HepG2 (cell line): ENCODE measurements at regions of chrX and their contacts with region 1.

Region 1: DNA sequence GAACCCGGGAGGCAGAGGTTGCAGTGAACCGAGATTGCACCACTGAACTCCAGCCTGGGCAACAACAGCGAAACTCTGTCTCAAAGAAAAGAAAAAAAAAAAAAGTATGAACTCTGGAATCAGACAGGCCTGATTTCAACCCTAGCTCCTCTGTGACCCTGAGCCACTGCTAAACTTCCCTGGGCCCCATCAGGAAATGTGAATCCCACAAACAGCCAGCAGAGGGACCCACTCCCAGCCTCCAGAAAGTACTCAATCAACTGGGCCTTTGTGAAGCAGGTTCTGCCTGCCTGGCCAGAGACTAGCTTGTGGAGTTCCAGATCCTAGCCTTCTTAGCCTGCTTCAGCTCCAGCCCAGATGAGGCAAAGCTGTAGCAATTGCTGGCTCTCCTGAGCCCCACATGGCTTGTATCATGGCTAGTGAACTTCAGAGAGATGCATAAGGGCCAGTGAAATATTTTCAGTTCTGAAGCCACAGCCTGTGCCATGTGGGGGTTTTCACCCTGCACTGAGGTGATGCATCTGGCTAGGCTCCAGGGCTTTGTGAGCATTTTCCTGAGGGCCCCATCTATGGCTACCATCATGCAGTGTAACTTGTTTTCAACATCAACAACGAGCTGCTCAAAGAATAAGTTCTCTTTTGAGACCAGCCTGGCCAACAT is 7.2 kb upstream of the IDS start:
- DNase-seq: peak; percentile 49
- ATAC-seq: peak; percentile 95
- H3K4me3 ChIP-seq: no peak overlapping the region
- H3K27ac ChIP-seq: no peak overlapping the region
- H3K4me1 ChIP-seq: peaks cover 10% of the 10 kb centered on the region; the same call in 1 of the 2 replicates
- H3K27me3 ChIP-seq: no peaks in the 10 kb centered on the region
- CTCF ChIP-seq: peak; percentile 71
- EP300 ChIP-seq: no peak
- POLR2A ChIP-seq: no peak
- RAD21 ChIP-seq: peak; percentile 21; the same call in 1 of the 2 replicates

Region 2: DNA sequence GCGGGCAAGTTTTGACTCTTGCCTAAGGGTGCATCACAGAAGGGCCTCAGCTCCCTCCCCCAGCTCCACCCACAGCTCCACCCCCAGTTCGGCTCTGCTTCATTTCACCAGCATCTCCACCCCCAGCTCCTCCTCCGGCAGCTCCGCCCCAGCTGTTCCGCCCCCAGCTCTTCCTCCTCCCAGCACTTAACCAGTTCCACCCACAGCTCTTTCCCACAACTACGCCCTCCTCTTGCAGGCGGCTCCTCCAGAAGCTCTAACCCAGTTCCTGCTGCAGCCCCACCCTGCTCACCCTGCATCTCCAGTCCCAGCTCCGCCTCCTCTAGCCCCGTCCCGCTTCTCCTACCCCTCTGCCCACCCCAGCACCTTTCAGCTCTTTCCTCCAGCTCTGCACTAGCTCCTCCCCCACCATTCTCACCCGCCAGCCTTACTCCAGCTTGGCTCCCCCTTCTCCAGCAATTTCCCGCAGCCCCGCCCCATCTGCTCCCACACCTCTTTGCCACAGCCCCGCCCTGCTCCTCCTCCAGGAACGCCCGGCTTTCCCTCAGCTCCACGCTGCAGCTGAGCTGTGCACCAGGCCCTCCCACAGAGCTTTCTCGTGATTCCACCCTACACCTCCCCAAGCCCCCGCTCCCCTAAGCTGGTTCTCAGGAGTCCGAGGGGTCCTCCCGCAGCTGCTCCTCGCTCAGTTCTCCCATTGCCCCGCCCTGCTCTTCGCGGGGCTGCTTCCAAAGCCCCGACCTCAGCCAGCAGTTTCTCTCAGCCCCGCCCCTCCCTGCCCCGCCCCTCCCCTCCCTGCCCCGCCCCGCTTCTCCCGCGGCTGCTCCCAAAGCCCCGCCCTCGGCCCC is 27.2 kb after region 1 on chrX:
- CTCF ChIA-PET with region 1: no interaction called
- POLR2A ChIA-PET with region 1: interaction called, 8 read pairs
- in situ Hi-C with region 1: no loop called
- intact Hi-C with region 1: loop called (anchors 1 kb)
- DNase-seq: peak; percentile 81
- ATAC-seq: peak; percentile 66
- H3K4me3 ChIP-seq: peak overlapping the region; percentile 45 to 66 (median 63)
- H3K27ac ChIP-seq: peak overlapping the region; percentile 57
- H3K4me1 ChIP-seq: no peaks in the 10 kb centered on the region
- H3K27me3 ChIP-seq: no peaks in the 10 kb centered on the region
- CTCF ChIP-seq: no peak
- EP300 ChIP-seq: no peak
- POLR2A ChIP-seq: no peak
- RAD21 ChIP-seq: no peak